ENCODE measurements at regions of chr18 and their contacts with region 1.

Region 1: DNA sequence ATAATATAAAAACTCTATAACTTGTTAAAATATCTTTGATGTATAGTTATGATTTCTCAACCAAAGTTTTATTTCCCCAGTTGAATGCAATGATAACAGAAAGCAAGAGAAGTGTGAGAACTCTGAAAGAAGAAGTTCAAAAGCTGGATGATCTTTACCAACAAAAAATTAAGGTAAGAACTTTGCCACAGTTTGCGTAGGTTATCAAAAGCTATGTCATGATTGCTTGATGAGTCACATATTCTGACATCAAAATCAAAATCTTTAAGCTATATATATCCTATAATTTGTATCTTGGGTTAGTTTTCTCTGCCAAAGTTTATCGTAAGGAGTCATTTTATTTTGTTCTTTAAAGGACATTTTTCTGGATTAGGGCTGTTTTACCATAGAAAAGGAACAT is 35.0 kb downstream of the NDC80 start:
- DNase-seq: no peak
- H3K4me3 Mint-ChIP-seq: peak overlapping the region; percentile 60
- H3K27ac Mint-ChIP-seq: peak overlapping the region; percentile 88
- H3K4me1 Mint-ChIP-seq: peaks cover 47% of the 10 kb centered on the region
- H3K27me3 Mint-ChIP-seq: no peaks in the 10 kb centered on the region

Region 2: DNA sequence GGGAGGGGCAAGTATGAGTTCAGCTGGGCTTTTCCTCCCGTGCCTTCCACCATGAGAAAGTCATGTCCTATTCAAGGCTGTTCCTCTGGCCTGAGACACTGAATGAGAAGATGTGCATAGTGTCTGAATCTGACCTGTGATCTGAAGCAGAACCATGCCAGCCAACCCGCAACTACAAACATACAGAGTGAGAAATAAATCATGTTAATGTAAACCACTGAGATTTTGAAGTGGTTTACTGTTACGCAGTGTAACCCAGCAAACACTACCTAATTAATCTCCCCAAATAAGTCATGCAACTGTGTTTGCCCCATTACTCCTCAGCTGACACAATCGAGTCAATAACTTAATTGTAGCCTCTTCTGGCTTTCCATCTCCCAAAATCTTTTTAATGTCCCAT is 84.2 kb before region 1 on chr18:
- CTCF ChIA-PET with region 1: no interaction called
- POLR2A ChIA-PET with region 1: no interaction called
- DNase-seq: no peak
- H3K4me3 Mint-ChIP-seq: no peak overlapping the region
- H3K27ac Mint-ChIP-seq: no peak overlapping the region
- H3K4me1 Mint-ChIP-seq: peaks cover 3% of the 10 kb centered on the region
- H3K27me3 Mint-ChIP-seq: no peaks in the 10 kb centered on the region

Region 3: GRCh38 chr18:2571200-2572143 is 34.9 kb before region 1 on chr18 and contains the starts of genes METTL4 and NDC80:
- CTCF ChIA-PET with region 1: interaction called, 3 read pairs
- POLR2A ChIA-PET with region 1: interaction called, 21 read pairs
- DNase-seq: peak; percentile 87
- H3K4me3 Mint-ChIP-seq: peak within 1 kb of the TSS; percentile 95
- H3K27ac Mint-ChIP-seq: peak within 1 kb of the TSS; percentile 96
- H3K4me1 Mint-ChIP-seq: peaks cover 55% of the 10 kb centered on the region
- H3K27me3 Mint-ChIP-seq: no peaks in the 10 kb centered on the region
- total RNA-seq, gene METTL4: 22.1 to 23.7 TPM
- total RNA-seq, gene NDC80: 78.0 to 78.9 TPM

Region 4: GRCh38 chr18:2589345-2590068 is 16.8 kb before region 1 on chr18:
- CTCF ChIA-PET with region 1: interaction called, 4 read pairs
- POLR2A ChIA-PET with region 1: interaction called, 16 read pairs
- DNase-seq: no peak
- H3K4me3 Mint-ChIP-seq: no peak overlapping the region
- H3K27ac Mint-ChIP-seq: peak overlapping the region; percentile 71
- H3K4me1 Mint-ChIP-seq: peaks cover 45% of the 10 kb centered on the region
- H3K27me3 Mint-ChIP-seq: no peaks in the 10 kb centered on the region

Region 5: GRCh38 chr18:2641638-2642037 is 35.3 kb after region 1 on chr18:
- CTCF ChIA-PET with region 1: interaction called, 7 read pairs
- POLR2A ChIA-PET with region 1: interaction called, 121 read pairs
- DNase-seq: no peak
- H3K4me3 Mint-ChIP-seq: peak overlapping the region; percentile 45
- H3K27ac Mint-ChIP-seq: peak overlapping the region; percentile 92
- H3K4me1 Mint-ChIP-seq: peaks cover 54% of the 10 kb centered on the region
- H3K27me3 Mint-ChIP-seq: no peaks in the 10 kb centered on the region

Region 6: DNA sequence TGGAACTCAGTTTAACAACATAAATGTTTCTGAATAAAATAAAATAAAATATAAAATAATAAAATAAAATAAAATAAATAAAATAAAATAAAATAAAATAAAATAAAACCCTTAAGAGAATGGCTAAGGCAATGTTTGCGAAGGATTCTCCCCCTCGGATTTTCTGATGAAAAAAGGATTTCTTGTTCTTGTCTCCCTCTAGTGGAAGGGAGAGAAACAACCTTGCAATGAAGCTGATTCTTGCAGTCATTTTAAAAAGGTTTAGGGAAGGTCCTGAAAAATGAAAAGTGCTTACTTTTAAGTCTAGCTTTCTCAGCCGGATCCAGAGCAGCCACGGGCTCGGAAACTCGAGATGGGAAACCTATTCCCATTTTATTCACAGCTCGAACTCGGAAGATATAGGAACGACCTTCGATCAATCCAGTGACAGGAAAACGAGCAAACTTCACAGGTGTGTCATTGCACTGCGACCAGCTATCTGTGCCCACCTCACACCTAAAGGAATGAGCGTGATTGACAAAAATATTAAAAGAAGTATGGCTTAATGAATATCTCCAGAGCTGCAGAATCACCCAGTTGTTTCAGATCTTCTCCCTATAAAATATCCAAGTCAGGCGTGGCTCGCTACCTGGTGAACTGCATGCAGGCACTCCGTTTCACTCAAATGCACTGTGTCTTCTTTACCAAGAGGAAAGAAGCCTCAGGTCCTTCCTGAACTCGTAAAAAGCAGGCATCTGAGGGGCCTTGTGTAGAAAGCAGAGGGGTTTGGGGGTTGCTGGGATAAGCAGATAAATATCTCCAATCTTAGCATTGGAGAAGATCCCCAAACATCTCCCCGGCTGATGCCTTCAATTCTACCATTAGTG is 545.3 kb after region 1 on chr18:
- CTCF ChIA-PET with region 1: no interaction called
- POLR2A ChIA-PET with region 1: no interaction called
- DNase-seq: no peak
- H3K4me3 Mint-ChIP-seq: no peak overlapping the region
- H3K27ac Mint-ChIP-seq: no peak overlapping the region
- H3K4me1 Mint-ChIP-seq: no peaks in the 10 kb centered on the region
- H3K27me3 Mint-ChIP-seq: peaks cover 11% of the 10 kb centered on the region